HepG2 (cell line): ENCODE measurements at regions of chr12 and their contacts with region 1.

Region 1: GRCh38 chr12:52139552-52140062 is 52.2 kb downstream of the KRT80 start:
- DNase-seq: no peak
- ATAC-seq: peak; percentile 89
- H3K4me3 ChIP-seq: no peak overlapping the region
- H3K27ac ChIP-seq: no peak overlapping the region
- H3K4me1 ChIP-seq: no peaks in the 10 kb centered on the region
- H3K27me3 ChIP-seq: peaks cover 2 to 32% of the 10 kb centered on the region in 2 experiments; a peak in 3 of 5 replicates
- CTCF ChIP-seq: peak; percentile 80
- EP300 ChIP-seq: no peak
- POLR2A ChIP-seq: no peak
- RAD21 ChIP-seq: peak; percentile 27; the same call in 1 of the 2 replicates

Region 2: DNA sequence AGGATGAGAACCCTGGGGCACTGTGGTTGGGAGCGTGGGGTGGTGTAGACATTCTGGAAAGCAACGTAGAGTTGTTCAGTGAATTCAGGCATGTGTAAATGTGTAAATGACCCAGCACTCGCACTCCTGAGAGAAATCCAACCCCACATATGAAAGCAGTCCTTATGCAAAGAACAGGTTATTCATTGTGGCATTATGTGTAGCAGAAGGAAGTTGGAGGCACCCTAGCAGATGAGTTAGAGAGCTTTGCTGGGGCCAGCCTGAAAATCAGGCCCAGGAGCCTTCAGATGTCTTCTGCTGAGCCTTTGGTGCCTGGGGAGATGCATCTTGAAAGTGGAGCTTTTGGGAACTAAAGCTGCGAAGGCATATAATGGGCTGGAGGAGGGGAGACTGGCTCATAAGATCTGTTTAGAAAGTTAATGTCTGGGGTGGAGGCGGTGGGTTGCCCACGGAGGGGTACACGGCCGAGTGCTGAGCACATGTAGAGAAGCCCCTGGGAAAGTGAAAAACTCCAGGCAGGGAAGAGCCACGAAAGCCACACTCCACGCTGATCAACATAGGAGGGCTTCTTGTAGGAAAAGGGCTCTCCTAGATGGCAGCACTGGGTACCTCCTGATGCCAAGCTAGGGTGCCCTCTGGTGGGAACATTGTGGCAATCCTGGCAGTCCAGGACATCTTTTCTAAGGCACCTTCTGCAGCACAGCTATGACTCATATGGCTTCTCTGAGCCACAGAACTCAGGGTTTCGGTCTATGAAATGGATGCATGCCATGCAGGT is 187.6 kb after region 1 on chr12:
- CTCF ChIA-PET with region 1: interaction called, 17 read pairs
- POLR2A ChIA-PET with region 1: no interaction called
- in situ Hi-C with region 1: no loop called
- intact Hi-C with region 1: no loop called
- DNase-seq: peak; percentile 78
- ATAC-seq: peak; percentile 97
- H3K4me3 ChIP-seq: no peak overlapping the region
- H3K27ac ChIP-seq: no peak overlapping the region
- H3K4me1 ChIP-seq: no peaks in the 10 kb centered on the region
- H3K27me3 ChIP-seq: peaks cover 3 to 13% of the 10 kb centered on the region in 2 experiments; a peak in 3 of 5 replicates
- CTCF ChIP-seq: peak; percentile 84
- EP300 ChIP-seq: no peak
- POLR2A ChIP-seq: no peak
- RAD21 ChIP-seq: peak; percentile 76

Region 3: GRCh38 chr12:52539083-52539820 is 399.6 kb after region 1 on chr12:
- CTCF ChIA-PET with region 1: no interaction called
- POLR2A ChIA-PET with region 1: no interaction called
- in situ Hi-C with region 1: loop called (anchors 25 kb)
- intact Hi-C with region 1: no loop called
- DNase-seq: no peak
- ATAC-seq: no peak
- H3K4me3 ChIP-seq: no peak overlapping the region
- H3K27ac ChIP-seq: no peak overlapping the region
- H3K4me1 ChIP-seq: no peaks in the 10 kb centered on the region
- H3K27me3 ChIP-seq: peaks cover 1 to 6% of the 10 kb centered on the region in 2 experiments; a peak in 2 of 5 replicates
- CTCF ChIP-seq: no peak
- EP300 ChIP-seq: no peak
- POLR2A ChIP-seq: no peak
- RAD21 ChIP-seq: no peak